ENCODE measurements at regions of chr1 and their contacts with region 1.

Region 1: GRCh38 chr1:115706587-115707425 is 61.7 kb downstream of the CASQ2 start:
- DNase-seq: peak; percentile 24
- H3K4me3 ChIP-seq: no peak overlapping the region
- CTCF ChIP-seq: peak; percentile 55

Region 2: GRCh38 chr1:115642168-115643072 is 64.4 kb before region 1 on chr1:
- CTCF ChIA-PET with region 1: interaction called, 17 read pairs
- POLR2A ChIA-PET with region 1: interaction called, 3 read pairs
- DNase-seq: no peak
- H3K4me3 ChIP-seq: peak overlapping the region; percentile 79
- CTCF ChIP-seq: no peak

Region 3: GRCh38 chr1:115669002-115669673 is 37.7 kb before region 1 on chr1:
- CTCF ChIA-PET with region 1: interaction called, 36 read pairs
- POLR2A ChIA-PET with region 1: no interaction called
- DNase-seq: peak; percentile 47
- H3K4me3 ChIP-seq: no peak overlapping the region
- CTCF ChIP-seq: no peak

Region 4: GRCh38 chr1:115685029-115685705 is 21.6 kb before region 1 on chr1:
- CTCF ChIA-PET with region 1: interaction called, 91 read pairs
- POLR2A ChIA-PET with region 1: no interaction called
- DNase-seq: no peak
- H3K4me3 ChIP-seq: no peak overlapping the region
- CTCF ChIP-seq: no peak

Region 5: GRCh38 chr1:115717541-115717940 is 10.7 kb after region 1 on chr1:
- CTCF ChIA-PET with region 1: interaction called, 60 read pairs
- POLR2A ChIA-PET with region 1: no interaction called
- DNase-seq: no peak
- H3K4me3 ChIP-seq: no peak overlapping the region
- CTCF ChIP-seq: peak; percentile 16

Region 6: DNA sequence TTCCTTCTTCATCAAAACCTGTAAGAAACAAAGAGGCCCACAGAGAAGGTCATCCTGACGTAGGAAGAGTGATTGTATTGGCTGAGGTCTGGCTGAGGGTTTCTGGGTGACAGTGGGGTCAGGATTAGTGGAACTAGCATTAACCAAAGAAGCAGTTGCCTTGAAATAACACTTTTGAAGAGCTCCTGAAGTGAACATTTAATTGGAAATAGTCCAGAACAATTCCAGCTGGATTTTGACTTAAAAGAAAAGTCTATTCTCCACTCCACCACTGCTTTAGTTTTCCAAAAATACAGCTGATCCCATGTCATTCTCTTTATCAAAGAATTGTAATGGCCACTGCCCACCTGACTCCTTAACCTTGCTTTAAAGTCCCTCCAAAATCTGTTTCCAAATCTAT is 34.0 kb after region 1 on chr1:
- CTCF ChIA-PET with region 1: interaction called, 11 read pairs
- POLR2A ChIA-PET with region 1: no interaction called
- DNase-seq: no peak
- H3K4me3 ChIP-seq: no peak overlapping the region
- CTCF ChIP-seq: no peak

Region 7: GRCh38 chr1:115771847-115772457 is 65.1 kb after region 1 on chr1:
- CTCF ChIA-PET with region 1: interaction called, 12 read pairs
- POLR2A ChIA-PET with region 1: no interaction called
- DNase-seq: peak; percentile 46
- H3K4me3 ChIP-seq: peak overlapping the region; percentile 18; the same call in 1 of the 2 replicates
- CTCF ChIP-seq: peak; percentile 65

Region 8: DNA sequence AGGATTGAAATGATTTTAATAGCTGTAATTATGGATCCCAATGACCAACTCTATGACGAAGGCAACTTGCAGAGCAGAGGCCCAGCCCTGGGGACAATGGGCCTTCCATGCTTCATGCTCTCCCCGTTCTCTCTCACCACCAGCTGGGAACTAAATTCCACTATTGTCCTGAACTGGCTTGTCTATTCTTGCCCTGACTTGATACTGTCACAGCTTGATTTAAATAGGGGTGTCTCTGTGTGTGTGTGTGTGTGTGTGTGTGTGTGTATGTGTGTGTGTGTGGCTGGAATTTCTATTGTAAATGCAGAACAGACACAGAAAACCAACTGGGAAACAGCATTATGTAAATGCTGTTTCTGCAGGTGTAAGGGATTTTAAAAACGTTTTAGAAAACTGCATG is 326.5 kb after region 1 on chr1:
- CTCF ChIA-PET with region 1: no interaction called
- POLR2A ChIA-PET with region 1: no interaction called
- DNase-seq: no peak
- H3K4me3 ChIP-seq: no peak overlapping the region
- CTCF ChIP-seq: no peak